ENCODE measurements at regions of chr5 and their contacts with region 1.

Region 1: GRCh38 chr5:150560401-150561193 is 52.7 kb downstream of the NDST1 start:
- DNase-seq: peak; percentile 84

Region 2: GRCh38 chr5:150436141-150436680 is 124.4 kb before region 1 on chr5:
- CTCF ChIA-PET with region 1: no interaction called
- POLR2A ChIA-PET with region 1: no interaction called
- DNase-seq: peak; percentile 88

Region 3: GRCh38 chr5:150458819-150459557 is 101.6 kb before region 1 on chr5:
- CTCF ChIA-PET with region 1: interaction called, 11 read pairs
- POLR2A ChIA-PET with region 1: no interaction called
- DNase-seq: peak; percentile 85

Region 4: GRCh38 chr5:150532996-150533395 is 27.6 kb before region 1 on chr5:
- CTCF ChIA-PET with region 1: no interaction called
- POLR2A ChIA-PET with region 1: no interaction called
- DNase-seq: no peak

Region 5: GRCh38 chr5:150544611-150545219 is 15.9 kb before region 1 on chr5:
- CTCF ChIA-PET with region 1: interaction called, 14 read pairs
- POLR2A ChIA-PET with region 1: no interaction called
- DNase-seq: peak; percentile 92

Region 6: DNA sequence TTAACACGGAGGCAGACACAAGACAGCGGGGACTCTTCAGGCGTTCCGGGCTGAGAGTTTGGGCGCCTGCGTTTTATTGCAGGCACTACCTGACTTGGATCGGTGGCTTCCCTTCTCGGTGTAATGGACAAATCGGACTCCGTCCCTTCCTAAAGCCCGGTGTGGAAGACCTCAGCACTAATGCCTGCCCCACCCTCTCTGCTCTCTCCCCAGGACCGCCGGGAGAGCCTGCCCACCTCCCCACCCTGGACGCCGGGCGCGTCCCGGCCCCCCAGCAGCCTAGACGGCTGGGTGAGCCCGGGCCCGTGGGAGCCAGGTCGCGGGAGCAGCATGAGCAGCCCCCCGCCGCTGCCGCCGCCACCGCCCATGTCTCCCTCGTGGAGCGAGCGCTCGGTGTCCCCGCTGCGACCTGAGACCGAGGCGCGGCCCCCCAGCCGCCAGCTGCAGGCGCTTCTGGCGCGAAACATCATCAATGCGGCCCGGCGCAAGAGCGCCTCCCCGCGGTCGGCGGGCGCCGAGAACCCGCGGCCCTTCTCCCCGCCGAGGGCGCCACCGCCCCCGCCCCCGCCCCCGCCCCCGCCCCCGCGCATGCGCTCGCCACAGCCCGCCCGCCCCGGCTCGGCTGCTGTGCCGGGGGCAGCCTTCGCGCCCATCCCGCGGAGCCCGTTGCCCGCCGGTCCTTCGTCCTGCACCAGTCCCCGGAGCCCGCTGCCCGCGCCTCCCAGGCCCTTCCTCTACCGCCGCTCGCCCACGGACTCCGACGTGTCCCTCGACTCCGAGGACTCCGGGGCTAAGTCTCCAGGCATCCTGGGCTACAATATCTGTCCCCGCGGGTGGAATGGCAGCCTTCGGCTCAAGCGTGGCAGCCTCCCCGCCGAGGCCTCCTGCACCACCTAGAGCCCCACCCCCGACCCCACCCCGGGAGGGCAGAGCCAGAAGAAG is 95.9 kb after region 1 on chr5:
- CTCF ChIA-PET with region 1: interaction called, 26 read pairs
- POLR2A ChIA-PET with region 1: interaction called, 29 read pairs
- DNase-seq: peak; percentile 98

Region 7: DNA sequence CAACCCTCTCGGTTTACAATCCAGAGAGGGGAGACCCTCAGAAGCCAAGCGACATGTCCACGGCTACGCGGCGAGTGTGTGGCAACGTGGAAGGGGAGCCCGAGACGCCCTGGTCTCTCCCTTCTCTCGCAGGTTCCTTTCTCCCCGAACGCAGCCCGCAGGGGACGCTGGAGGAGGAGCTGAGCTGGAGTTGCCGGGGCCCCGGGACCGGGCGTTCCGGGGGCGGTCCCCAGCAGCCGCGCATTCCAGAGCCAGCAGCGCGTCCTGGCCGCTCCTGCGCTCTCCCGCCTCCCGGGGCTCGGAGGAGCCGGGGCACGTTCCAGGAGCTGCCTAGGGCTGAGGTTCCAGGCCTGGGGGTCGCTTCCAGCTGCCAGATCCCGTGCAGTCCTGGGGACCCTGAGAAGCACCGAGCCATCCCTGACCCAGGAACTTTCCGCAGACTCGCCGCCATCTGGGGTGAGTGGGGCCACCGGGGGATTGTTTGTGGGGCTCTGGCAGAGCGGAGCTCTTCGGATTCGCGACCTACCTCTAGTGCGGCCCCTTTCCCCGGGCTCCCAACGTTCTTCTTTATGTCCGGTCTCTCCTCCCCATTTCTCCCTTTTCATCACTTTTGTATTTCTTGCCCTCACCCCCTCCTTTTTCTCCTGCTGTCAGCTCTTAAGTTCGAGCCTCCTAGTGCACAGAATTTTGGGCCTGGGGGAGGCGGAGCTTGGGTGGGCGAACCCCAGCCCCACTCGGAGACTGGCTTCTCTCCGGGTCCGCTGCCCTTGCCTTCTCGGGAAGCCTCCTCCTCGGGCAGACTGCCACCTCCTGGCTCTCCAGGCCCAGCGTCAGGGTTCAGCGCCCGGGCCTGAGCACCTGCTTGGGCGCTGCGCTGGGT is 218.2 kb after region 1 on chr5 and contains the start of gene SMIM3:
- CTCF ChIA-PET with region 1: interaction called, 10 read pairs
- POLR2A ChIA-PET with region 1: interaction called, 3 read pairs
- DNase-seq: peak; percentile 74

Region 8: GRCh38 chr5:150846654-150847333 is 286.2 kb after region 1 on chr5:
- CTCF ChIA-PET with region 1: interaction called, 26 read pairs
- POLR2A ChIA-PET with region 1: no interaction called
- DNase-seq: peak; percentile 65

Measured in HEK293T (cell line).